Activated CD4-positive, alpha-beta T cell treated with anti-CD3 and anti-CD28 coated beads, Interleukin-2, amount 10 ng/mL, durations not matched to agents 7 days and 5 days (primary cell): ENCODE measurements at regions of chr11 and their contacts with region 1.

Region 1: DNA sequence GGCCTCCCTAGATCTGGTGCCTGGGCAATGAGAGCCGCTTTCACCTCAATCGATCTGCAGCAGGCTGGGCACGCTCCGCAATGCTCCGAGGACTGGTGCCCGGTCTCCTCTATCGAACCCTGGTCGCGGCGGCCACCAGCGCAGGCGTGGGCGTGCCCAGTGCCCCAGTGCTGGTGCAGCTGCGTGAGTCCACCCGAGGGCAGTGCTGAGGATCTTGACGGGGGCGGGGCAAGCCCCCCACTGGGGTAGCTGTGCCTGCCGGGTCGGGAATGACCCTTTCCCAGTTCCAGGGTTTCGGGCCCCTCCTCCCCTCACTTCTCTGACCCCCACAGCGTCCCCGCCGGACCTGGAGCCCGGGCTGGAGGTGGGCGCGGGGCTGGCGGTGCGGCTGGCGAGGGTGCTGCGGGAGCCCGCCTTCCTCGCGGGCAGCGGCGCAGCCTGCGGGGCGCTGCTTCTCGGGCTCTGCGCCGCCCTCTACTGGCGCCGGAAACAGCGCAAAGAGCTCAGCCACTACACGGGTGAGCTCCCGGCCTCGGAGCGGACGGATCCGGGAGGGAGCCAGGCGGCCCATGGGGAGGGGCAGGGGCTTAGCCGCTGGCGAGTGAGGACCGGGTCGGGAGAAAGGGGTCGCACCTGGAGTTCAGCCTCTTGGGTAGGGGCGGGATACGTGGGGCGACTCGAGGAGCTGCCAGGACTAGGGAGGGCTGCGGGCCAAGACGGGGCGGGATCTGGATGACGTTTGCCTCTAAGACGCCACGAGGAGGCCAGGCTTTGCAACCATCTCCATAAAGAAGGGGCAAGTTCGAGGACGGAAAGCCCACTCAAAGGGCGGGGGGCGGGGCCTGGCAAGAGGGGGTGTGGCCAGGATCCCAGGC is 10.9 kb downstream of the ROBO3 start:
- DNase-seq: peak; percentile 79
- H3K4me3 Mint-ChIP-seq: peak overlapping the region; percentile 75
- H3K27ac Mint-ChIP-seq: peak overlapping the region; percentile 90
- H3K4me1 Mint-ChIP-seq: peaks cover 19% of the 10 kb centered on the region
- H3K27me3 Mint-ChIP-seq: peaks cover 40% of the 10 kb centered on the region

Region 2: DNA sequence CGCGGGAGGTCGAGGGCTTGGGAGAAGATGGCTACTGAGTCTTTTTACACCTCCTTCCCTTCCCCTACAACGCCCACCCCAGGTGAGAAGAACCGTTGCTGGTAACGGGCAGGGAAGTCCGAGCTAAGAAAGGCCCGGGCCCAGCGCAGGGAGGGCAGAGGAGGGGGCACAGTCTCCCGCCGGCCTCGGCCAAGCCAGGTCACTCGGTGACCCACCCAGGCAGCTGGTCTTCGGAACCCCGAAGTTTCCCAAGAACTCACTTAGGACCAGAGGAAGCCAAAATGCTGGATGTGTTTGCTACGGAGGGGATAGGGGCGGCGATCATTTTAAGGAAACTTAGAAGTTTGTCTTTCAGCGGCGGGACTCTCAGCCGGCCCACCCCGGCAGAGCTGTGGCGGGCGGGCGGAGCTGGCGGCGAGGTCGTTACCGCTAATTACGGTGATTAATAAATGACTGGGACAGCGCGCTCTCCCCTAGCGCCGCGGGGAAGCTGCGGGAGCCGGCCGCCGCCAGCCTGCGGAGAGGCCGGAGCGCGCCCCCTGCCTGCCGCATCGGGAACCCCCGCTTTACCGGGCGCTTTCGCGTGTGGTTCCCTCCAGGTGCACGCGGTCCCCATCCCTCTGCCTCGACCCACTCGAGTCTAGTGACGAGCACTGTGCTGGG is 10.1 kb before region 1 on chr11:
- CTCF ChIA-PET with region 1: interaction called, 13 read pairs
- POLR2A ChIA-PET with region 1: no interaction called
- DNase-seq: peak; percentile 46
- H3K4me3 Mint-ChIP-seq: no peak overlapping the region
- H3K27ac Mint-ChIP-seq: peak overlapping the region; percentile 14
- H3K4me1 Mint-ChIP-seq: peaks cover 18% of the 10 kb centered on the region
- H3K27me3 Mint-ChIP-seq: peaks cover 94% of the 10 kb centered on the region

Region 3: GRCh38 chr11:124886476-124886875 is 10.3 kb after region 1 on chr11:
- CTCF ChIA-PET with region 1: interaction called, 10 read pairs
- POLR2A ChIA-PET with region 1: no interaction called
- DNase-seq: no peak
- H3K4me3 Mint-ChIP-seq: no peak overlapping the region
- H3K27ac Mint-ChIP-seq: no peak overlapping the region
- H3K4me1 Mint-ChIP-seq: no peaks in the 10 kb centered on the region
- H3K27me3 Mint-ChIP-seq: peaks cover 2% of the 10 kb centered on the region